Dendritic cell treated with granulocyte-macrophage colony-stimulating factor and Interleukin-4, amounts not matched to agents 40 ng/mL and 50 ng/mL, for 4 days (primary cell): ENCODE measurements at regions of chr17 and their contacts with region 1.

Region 1: GRCh38 chr17:58006924-58007780 is at the start of gene SRSF1:
- H3K4me3 Mint-ChIP-seq: peak within 1 kb of the TSS; percentile 97
- H3K27ac Mint-ChIP-seq: peak within 1 kb of the TSS; percentile 96
- H3K4me1 Mint-ChIP-seq: peaks cover 36% of the 10 kb centered on the region
- H3K27me3 Mint-ChIP-seq: no peaks in the 10 kb centered on the region

Region 2: GRCh38 chr17:58083491-58084316 is 76.6 kb after region 1 on chr17:
- intact Hi-C with region 1: loop called (anchors 2 kb)
- H3K4me3 Mint-ChIP-seq: peak overlapping the region; percentile 82
- H3K27ac Mint-ChIP-seq: peak overlapping the region; percentile 55
- H3K4me1 Mint-ChIP-seq: peaks cover 32% of the 10 kb centered on the region
- H3K27me3 Mint-ChIP-seq: peaks cover 10% of the 10 kb centered on the region